ENCODE measurements at regions of chr6 and their contacts with region 1.

Region 1: GRCh38 chr6:137076277-137077068 is 31.7 kb upstream of the IL20RA start:
- DNase-seq: peak; percentile 70
- CTCF ChIP-seq: peak; percentile 89

Region 2: GRCh38 chr6:137089305-137089704 is 12.8 kb after region 1 on chr6:
- CTCF ChIA-PET with region 1: interaction called, 59 read pairs
- POLR2A ChIA-PET with region 1: no interaction called
- DNase-seq: no peak
- CTCF ChIP-seq: no peak

Region 3: DNA sequence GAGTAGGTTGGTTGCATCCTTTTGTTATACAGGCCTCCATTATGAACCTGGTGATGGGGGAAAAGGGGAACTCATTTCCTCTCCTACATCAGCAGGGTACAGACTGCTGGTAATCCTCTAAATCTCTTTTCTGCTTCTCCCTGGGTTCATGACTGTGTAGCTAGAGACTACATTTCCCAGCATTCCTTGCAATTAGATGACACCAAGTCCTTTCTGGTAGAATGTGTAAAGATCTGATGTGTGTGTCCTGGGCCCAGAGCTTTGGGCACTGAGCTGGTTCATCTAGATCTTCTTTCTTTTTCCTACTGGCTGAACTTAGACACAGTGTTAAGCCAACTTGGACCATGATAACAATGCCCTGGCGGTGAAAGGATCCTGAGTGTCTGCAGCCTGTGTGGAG is 247.4 kb after region 1 on chr6:
- CTCF ChIA-PET with region 1: interaction called, 10 read pairs
- POLR2A ChIA-PET with region 1: no interaction called
- DNase-seq: no peak
- CTCF ChIP-seq: no peak